GM12878 (cell line): ENCODE measurements at regions of chr4 and their contacts with region 1.

Region 1: DNA sequence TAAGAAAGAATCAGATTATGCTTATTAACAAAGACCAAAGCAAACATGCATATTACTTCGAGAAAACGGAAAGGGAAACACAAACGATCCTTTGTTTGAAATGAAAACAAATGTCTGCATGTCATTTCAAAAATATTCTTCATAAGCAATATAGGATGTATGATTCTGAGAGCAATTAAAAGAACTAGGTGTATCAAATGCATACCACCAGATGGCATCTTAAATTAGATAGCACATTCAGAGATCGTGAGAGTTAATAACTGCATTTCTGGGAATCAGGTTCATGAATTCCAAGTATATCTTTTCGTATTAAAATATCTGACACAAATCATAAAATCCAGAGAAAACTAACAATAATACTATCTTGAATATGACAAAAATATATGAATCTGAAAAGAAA is 159.5 kb downstream of the PPP3CA start:
- DNase-seq: no peak
- ATAC-seq: no peak
- H3K4me3 ChIP-seq: no peak overlapping the region
- H3K27ac ChIP-seq: no peak overlapping the region
- H3K4me1 ChIP-seq: no peaks in the 10 kb centered on the region
- H3K27me3 ChIP-seq: no peaks in the 10 kb centered on the region
- CTCF ChIP-seq: peak in 1 of 3 experiments; percentile 4; a peak in 1 of 6 replicates
- EP300 ChIP-seq: no peak
- POLR2A ChIP-seq: no peak
- RAD21 ChIP-seq: 0 out of 2 replicates have a peak, but pooled peaks have one; percentile 5

Region 2: DNA sequence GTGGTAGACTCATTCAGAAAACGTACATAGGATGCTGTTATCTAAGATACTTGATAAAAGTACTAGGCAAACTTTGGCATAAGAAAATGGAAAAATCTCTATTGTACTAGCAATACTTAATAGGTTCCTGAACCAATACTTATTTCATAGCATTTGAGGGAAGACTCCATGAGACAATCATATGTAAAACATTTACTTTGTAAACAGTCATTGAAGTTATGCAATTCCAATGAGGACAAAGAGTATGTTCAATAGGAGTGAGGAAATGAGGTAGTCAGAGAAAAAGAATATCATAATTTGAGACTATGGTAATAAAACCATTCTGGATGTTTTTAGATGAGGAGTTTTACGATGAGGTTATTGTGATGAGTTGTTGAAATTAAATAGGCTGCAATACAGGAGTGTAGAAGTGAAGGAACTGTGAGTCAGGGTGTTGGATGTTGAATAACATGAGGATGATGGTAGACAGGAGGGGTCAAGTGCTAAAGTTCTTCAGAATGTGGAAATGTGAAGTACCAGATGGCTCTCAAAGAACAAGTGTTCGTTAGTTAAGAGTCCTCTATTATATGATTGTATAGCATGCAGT is 238.4 kb before region 1 on chr4:
- CTCF ChIA-PET with region 1: no interaction called
- POLR2A ChIA-PET with region 1: no interaction called
- RAD21 ChIA-PET with region 1: no interaction called
- SMC1A ChIA-PET with region 1: no interaction called
- in situ Hi-C with region 1: no loop called
- intact Hi-C with region 1: no loop called
- DNase-seq: no peak
- ATAC-seq: no peak
- H3K4me3 ChIP-seq: no peak overlapping the region
- H3K27ac ChIP-seq: no peak overlapping the region
- H3K4me1 ChIP-seq: no peaks in the 10 kb centered on the region
- H3K27me3 ChIP-seq: no peaks in the 10 kb centered on the region
- CTCF ChIP-seq: no peak
- EP300 ChIP-seq: no peak
- POLR2A ChIP-seq: no peak
- RAD21 ChIP-seq: no peak

Region 3: GRCh38 chr4:101439926-101440325 is 252.1 kb after region 1 on chr4:
- CTCF ChIA-PET with region 1: no interaction called
- POLR2A ChIA-PET with region 1: no interaction called
- RAD21 ChIA-PET with region 1: no interaction called
- SMC1A ChIA-PET with region 1: no interaction called
- in situ Hi-C with region 1: no loop called
- intact Hi-C with region 1: loop called (anchors 10 kb)
- DNase-seq: no peak
- ATAC-seq: no peak
- H3K4me3 ChIP-seq: no peak overlapping the region
- H3K27ac ChIP-seq: no peak overlapping the region
- H3K4me1 ChIP-seq: no peaks in the 10 kb centered on the region
- H3K27me3 ChIP-seq: no peaks in the 10 kb centered on the region
- CTCF ChIP-seq: no peak
- EP300 ChIP-seq: no peak
- POLR2A ChIP-seq: no peak
- RAD21 ChIP-seq: no peak